Endothelial cell of umbilical vein (primary cell): ENCODE measurements at regions of chr9 and their contacts with region 1.

Region 1: DNA sequence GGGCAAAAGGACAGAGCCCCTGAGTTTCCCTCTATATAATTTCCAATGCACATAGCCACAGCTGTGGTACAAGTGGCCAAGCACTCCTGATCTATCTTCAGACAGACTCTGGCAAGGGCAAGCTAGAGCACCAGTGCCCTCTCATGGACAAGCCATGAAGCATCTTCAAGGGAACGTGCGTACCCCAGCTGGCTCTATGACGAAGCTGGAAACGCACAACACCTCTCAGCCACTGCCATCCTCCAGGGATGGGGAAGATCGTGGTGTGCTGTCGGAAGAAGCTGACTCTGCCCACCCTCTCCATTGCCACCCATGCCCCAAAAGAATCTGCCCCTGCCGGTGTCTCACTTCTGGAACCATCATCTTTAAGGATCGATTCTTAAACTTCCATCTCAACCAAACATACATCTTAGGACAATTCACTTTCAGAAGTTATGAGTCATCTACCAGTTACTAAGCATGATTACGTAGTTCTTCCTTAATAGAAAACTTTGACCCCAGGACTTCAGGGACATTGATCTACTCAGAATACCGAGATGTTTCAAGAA is 482.9 kb downstream of the AGTPBP1 start:
- DNase-seq: peak; percentile 80
- H3K4me3 ChIP-seq: peak overlapping the region in 1 of 3 experiments; percentile 41
- H3K27ac ChIP-seq: peak overlapping the region; percentile 27
- H3K4me1 ChIP-seq: peaks cover 15% of the 10 kb centered on the region
- H3K27me3 ChIP-seq: peaks cover 0 to 4% of the 10 kb centered on the region in 2 experiments
- CTCF ChIP-seq: peak; percentile 69 to 82
- POLR2A ChIP-seq: no peak

Region 2: DNA sequence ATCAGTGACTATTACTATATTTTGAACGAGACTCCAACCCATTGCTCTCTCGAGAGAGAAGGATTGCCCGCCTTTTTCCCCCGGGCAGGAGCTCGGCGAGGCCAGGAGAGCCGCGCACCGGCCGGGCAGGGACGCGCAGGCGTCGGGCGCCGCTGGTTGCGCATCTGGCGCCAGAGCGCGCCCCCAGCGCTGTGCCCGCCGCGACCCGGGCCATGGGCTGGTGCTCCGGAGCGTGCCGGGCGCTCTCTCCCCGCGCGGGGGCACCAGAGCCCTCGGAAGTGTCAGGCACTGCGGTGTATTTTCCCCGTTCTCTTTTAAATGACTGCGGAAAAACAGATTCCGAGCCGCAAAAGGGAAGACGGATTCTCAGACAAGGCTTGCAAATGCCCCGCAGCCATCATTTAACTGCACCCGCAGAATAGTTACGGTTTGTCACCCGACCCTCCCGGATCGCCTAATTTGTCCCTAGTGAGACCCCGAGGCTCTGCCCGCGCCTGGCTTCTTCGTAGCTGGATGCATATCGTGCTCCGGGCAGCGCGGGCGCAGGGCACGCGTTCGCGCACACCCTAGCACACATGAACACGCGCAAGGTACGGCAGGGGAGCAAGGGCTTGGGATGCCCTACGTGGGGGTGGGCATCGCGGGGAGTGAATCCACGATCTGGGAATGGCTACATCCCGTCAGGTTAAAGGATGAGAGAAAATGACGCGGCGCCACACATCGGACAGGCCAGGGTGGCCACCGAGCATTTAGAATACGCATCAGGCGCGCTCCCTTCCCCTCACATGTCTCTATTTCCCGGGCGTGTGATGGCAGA is 590.5 kb before region 1 on chr9:
- CTCF ChIA-PET with region 1: interaction called, 5 read pairs
- POLR2A ChIA-PET with region 1: no interaction called
- dilution Hi-C with region 1: no loop called
- intact Hi-C with region 1: loop called (anchors 1 kb)
- DNase-seq: peak; percentile 52
- H3K4me3 ChIP-seq: peak overlapping the region in 2 of 3 experiments; percentile 29 to 40
- H3K27ac ChIP-seq: no peak overlapping the region
- H3K4me1 ChIP-seq: peaks cover 15% of the 10 kb centered on the region
- H3K27me3 ChIP-seq: peaks cover 32 to 62% of the 10 kb centered on the region in 2 experiments
- CTCF ChIP-seq: peak; percentile 59 to 60
- POLR2A ChIP-seq: no peak

Region 3: DNA sequence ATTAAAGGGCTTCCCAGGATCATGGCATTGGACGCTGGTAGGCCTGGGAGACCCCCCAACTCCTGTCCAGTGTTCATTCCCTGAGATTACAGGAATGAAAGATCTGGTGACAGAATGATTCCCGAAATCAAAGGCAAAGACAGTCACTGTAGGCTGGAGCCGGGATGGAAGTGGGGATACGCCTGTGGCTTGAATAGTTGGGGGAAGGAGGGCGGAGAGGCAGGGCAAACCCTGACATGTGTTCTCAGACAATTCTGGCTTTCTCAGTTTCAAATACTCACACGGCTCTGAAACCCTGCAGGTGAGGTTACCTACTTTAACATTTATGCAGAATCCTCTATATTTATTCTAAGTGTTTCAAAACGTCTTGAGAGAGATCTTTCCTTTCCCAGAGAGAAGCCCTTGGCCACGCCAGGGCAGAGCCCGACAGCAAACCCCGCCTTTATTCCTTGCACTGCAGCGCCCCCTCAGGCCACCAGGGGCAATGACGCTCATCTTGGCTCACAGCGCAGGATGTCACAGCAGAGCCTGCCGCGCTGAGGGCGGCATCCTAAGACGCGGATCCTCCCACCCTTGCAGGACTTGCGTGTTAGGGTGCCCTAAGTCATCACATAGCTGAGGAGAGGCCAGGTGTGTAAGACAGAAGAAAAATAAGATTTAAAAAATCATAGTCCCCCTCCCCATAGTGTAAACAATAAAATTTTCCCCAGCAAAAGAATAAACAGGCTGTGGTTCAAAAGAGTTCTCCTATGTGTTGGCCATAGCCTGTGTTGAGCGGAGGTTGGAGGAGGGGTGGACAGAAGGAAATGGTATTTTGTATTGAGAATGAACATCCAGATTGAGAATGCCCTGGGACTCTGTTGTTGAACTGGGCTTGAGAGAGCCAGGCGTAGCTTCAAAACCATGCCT is 304.8 kb before region 1 on chr9:
- CTCF ChIA-PET with region 1: interaction called, 4 read pairs
- POLR2A ChIA-PET with region 1: no interaction called
- dilution Hi-C with region 1: no loop called
- intact Hi-C with region 1: loop called (anchors 1 kb)
- DNase-seq: peak; percentile 67
- H3K4me3 ChIP-seq: no peak overlapping the region
- H3K27ac ChIP-seq: no peak overlapping the region
- H3K4me1 ChIP-seq: no peaks in the 10 kb centered on the region
- H3K27me3 ChIP-seq: no peaks in the 10 kb centered on the region
- CTCF ChIP-seq: peak; percentile 95 to 97
- POLR2A ChIP-seq: no peak

Region 4: DNA sequence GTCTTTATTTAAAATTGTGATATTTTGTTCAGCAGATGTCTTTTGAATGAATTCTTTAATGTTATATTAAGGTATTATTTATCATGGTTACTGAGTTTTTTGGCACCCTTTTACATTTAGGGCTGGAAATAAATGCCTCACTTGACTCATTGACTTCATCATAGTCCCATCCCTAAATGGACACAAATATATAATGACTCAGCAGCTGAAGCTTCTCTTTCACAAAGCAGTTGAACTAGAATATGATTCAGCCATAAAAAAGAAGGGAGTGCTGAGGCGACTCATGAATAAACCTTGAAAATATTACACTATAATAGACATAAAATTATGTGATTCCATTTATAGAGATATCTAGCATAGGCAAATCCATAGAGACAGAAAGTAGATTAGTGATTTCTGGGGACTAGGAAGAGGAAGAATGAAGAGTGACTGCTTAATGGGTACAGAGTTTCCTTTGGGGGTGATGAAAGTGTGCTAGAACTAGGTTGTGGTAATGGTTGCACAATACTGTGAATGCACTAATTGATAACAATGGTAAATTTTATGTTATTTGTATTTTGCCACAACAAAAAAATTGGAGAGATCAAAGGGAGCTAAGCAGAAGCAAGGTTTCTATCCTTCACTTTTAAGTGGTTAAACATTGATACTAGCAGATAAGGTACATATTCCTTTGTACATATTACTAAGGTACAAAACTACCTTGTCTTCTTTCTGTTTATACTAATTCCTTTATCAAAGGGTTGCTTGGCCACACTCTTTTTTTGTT is 139.7 kb before region 1 on chr9:
- CTCF ChIA-PET with region 1: no interaction called
- POLR2A ChIA-PET with region 1: no interaction called
- dilution Hi-C with region 1: no loop called
- intact Hi-C with region 1: no loop called
- DNase-seq: no peak
- H3K4me3 ChIP-seq: no peak overlapping the region
- H3K27ac ChIP-seq: no peak overlapping the region
- H3K4me1 ChIP-seq: no peaks in the 10 kb centered on the region
- H3K27me3 ChIP-seq: no peaks in the 10 kb centered on the region
- CTCF ChIP-seq: no peak
- POLR2A ChIP-seq: no peak

Region 5: DNA sequence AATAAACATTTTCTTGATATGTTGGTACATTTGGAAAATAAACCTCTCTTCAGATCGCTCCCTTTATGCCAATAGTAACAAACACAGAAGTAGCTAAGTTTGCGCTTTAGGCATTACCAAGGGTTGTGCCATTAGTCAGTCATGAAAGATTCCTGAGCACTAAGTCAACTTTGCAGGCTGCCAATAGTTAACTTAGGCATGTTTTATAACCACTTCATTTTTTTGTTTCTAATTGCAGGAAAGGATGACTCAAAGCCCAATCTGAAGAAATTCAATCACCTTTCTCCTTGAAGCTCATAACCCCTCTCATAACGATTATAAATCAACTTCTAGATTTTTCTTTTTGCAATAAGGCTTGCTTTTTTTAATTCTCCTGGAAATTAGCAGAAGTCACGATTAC is 34.2 kb before region 1 on chr9:
- CTCF ChIA-PET with region 1: interaction called, 10 read pairs
- POLR2A ChIA-PET with region 1: no interaction called
- dilution Hi-C with region 1: no loop called
- intact Hi-C with region 1: no loop called
- DNase-seq: peak; percentile 70
- H3K4me3 ChIP-seq: no peak overlapping the region
- H3K27ac ChIP-seq: no peak overlapping the region
- H3K4me1 ChIP-seq: peaks cover 17% of the 10 kb centered on the region
- H3K27me3 ChIP-seq: no peaks in the 10 kb centered on the region
- CTCF ChIP-seq: no peak
- POLR2A ChIP-seq: no peak

Region 6: DNA sequence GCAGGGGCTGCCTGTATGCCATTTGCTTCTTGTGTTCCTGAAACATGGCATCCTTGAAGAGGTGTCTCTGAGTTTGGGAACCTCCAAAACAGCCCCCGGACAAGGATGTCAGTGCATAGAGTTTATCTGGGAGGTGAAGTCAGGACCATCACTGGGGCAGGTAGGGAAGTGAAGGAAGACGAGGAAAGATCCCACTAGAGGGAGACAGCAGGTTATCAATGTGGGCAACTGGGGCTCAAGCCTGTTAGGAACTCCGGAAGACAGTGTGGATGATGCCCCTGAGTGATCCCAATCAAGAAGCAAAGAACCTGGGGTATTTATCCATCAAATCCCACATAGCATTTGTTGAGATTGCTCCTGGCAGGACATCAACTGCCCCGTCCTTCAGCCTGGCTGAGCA is 249.7 kb after region 1 on chr9:
- CTCF ChIA-PET with region 1: no interaction called
- POLR2A ChIA-PET with region 1: no interaction called
- dilution Hi-C with region 1: no loop called
- intact Hi-C with region 1: no loop called
- DNase-seq: no peak
- H3K4me3 ChIP-seq: no peak overlapping the region
- H3K27ac ChIP-seq: no peak overlapping the region
- H3K4me1 ChIP-seq: no peaks in the 10 kb centered on the region
- H3K27me3 ChIP-seq: no peaks in the 10 kb centered on the region
- CTCF ChIP-seq: no peak
- POLR2A ChIP-seq: no peak